Left cardiac atrium (tissue), 4 donors: ENCODE measurements at regions of chr14 and their contacts with region 1.

Region 1: GRCh38 chr14:74945823-74946682 is 9.3 kb downstream of the PGF start:
- DNase-seq: peak; percentile 81
- ATAC-seq: peak; percentile 81 to 82

Region 2: GRCh38 chr14:74281069-74281468 is 665.0 kb before region 1 on chr14:
- intact Hi-C with region 1: no loop called
- DNase-seq: no peak
- ATAC-seq: no peak

Region 3: DNA sequence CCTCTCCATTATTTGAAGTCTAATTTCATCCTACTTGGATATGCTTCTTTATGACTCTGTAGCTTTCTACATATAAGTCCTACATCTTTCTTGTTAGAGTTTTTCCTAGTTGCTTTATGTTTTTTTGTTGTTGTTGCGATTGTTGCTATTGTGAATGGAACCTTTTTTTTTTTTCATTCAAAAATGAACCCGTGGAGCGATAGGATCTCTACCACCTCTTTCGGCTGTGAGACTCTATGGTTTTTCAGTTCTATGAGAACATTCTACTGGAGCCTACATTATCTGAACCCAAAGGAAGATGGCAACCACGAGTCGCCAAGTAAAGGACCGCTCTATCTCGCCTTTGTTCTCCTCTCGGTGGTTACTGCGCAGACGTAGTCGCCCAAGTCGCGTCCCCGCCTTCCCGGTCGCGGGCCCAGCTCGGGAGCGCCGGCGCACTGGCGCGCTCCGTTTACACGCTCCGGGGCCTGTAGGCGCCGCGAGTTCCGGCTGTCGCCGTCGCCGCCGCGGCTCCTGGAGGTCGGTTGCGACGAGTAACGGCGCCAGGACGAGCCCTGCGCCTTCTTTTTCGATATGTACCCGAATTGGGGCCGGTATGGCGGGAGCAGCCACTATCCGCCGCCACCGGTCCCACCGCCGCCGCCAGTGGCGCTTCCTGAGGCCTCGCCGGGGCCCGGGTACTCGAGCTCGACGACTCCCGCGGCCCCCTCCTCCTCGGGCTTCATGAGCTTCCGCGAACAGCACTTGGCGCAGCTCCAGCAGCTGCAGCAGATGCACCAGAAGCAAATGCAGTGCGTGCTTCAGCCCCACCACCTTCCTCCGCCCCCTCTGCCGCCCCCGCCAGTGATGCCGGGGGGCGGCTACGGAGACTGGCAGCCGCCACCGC is 182.9 kb before region 1 on chr14 and contains the start of gene YLPM1:
- intact Hi-C with region 1: no loop called
- DNase-seq: peak; percentile 93
- ATAC-seq: peak; percentile 98 to 99
- total RNA-seq, gene YLPM1: 28.3 to 31.5 TPM

Region 4: DNA sequence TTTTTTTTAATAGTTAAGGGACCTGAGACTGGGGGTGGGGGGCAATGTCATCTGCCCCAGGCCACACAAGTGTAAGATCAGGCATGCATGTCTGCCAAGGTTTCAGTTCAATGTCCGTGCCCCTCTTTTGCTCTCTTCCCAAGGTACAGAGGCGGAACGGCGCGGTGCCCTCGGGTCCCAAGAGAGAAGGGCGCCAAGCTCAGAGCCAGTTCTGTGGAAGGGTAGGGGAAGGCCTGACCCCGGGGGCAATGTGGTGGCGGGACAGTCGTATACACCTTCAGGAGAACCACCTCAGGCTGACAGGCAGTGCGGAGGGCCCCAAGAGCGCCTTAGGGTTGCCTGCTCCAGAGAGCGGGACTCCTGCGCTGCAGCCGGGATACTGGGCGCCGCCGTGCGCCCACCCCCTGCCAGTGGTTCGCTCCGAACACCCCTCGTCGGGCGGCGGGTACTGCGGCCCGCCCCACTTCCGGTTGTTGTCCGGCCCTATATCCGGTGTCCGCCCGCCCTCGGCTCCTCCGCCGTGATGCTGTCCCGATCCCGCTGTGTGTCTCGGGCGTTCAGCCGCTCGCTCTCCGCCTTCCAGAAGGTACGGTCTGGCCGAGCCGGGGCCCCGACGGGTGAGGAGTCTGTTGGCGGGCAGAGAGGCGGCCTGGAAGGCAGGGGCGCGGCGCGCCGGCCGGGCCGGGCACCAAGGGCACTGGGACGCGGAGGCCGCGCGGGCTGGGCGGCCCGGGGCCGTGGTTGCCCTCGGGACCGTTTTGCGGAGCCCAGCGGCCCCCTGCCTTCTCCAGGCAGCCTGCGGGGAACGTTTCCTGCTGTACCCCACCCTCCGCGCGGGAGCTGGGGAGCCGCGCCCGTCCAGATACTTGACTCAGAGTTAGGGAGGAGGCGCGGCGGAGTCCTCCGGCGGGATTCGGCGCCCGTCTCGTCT is 64.4 kb before region 1 on chr14 and contains the start of gene DLST:
- intact Hi-C with region 1: no loop called
- DNase-seq: peak; percentile 90
- ATAC-seq: peak; percentile 99
- total RNA-seq, gene DLST: 133 to 137 TPM

Region 5: GRCh38 chr14:75002392-75003249 is 56.6 kb after region 1 on chr14 and contains the start of gene EIF2B2:
- intact Hi-C with region 1: loop called in 1 of 2 experiments (anchors 5 kb)
- DNase-seq: peak; percentile 98
- ATAC-seq: peak; percentile 100
- total RNA-seq, gene EIF2B2: 27.8 to 30.3 TPM

Region 6: DNA sequence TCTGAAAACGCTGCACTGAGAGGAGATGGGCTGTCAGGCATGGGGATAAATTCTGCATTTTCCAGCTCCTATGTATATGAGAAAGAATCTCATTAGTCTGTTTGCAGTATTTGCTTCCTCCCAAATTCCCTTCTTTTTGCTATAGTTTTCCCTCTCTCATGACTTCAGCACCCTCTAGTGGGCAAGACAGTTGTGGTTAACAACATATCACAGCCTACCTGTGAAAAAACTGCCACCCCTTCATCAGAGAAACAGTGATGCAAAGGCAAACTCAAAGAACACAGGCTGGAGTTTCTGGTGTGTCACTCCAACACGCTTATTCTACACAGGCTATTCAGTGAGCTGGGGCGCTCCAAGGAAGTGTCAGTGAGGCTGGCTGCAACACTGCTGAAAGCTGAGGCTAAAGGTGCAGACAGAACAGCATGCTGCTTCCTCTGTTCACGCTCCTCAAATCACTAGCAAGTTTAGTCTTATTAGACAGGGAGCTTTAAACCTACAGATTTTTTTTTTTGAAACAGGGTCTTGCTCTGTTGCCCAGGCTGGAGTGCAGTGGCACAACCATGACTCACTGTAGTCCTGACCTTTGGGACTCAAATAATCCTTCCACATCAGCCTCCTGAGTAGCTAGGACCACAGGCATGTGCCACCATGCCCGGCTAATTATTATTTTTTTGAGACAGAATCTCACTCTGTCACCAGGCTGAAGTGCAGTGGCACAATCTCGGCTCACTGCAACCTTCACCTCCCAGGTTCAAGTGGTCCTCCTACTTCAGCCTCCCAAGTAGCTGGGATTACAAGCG is 142.7 kb after region 1 on chr14:
- intact Hi-C with region 1: loop called (anchors 10 kb)
- DNase-seq: no peak
- ATAC-seq: peak; percentile 74 to 76